ENCODE measurements at regions of chr17 and their contacts with region 1.

Region 1: GRCh38 chr17:63434876-63435684 is 11.0 kb downstream of the CYB561 start:
- DNase-seq: peak; percentile 69
- H3K4me3 ChIP-seq: no peak overlapping the region
- H3K27ac ChIP-seq: peak overlapping the region; percentile 97
- H3K4me1 ChIP-seq: peaks cover 48 to 94% of the 10 kb centered on the region in 2 experiments
- H3K27me3 ChIP-seq: no peaks in the 10 kb centered on the region
- CTCF ChIP-seq: peak; percentile 62
- EP300 ChIP-seq: peak in 1 of 2 experiments; percentile 73; a peak in 2 of 4 replicates
- RAD21 ChIP-seq: peak; percentile 25

Region 2: DNA sequence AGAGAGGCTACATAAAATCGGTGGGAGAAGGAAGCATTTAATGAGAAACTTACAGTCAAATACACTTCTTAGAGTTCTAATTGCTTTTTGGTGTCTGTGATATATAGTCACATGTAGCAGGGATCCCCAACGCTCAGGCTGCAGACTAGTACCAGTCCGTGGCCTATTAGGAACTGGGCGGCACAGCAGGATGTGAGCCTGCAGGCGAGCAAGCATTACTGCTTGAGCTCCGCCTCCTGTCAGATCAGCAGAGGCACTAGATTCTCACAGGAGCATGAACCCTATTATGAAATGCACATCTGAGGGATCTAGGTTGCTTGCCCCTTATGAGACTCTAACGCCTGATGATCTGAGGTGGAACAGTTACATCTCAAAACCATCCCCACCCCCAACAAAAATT is 310.5 kb before region 1 on chr17:
- CTCF ChIA-PET with region 1: no interaction called
- POLR2A ChIA-PET with region 1: no interaction called
- DNase-seq: no peak
- H3K4me3 ChIP-seq: no peak overlapping the region
- H3K27ac ChIP-seq: no peak overlapping the region
- H3K4me1 ChIP-seq: peaks cover 2 to 5% of the 10 kb centered on the region in 2 experiments; a peak in 3 of 4 replicates
- H3K27me3 ChIP-seq: no peaks in the 10 kb centered on the region
- CTCF ChIP-seq: no peak
- EP300 ChIP-seq: no peak
- RAD21 ChIP-seq: no peak

Region 3: DNA sequence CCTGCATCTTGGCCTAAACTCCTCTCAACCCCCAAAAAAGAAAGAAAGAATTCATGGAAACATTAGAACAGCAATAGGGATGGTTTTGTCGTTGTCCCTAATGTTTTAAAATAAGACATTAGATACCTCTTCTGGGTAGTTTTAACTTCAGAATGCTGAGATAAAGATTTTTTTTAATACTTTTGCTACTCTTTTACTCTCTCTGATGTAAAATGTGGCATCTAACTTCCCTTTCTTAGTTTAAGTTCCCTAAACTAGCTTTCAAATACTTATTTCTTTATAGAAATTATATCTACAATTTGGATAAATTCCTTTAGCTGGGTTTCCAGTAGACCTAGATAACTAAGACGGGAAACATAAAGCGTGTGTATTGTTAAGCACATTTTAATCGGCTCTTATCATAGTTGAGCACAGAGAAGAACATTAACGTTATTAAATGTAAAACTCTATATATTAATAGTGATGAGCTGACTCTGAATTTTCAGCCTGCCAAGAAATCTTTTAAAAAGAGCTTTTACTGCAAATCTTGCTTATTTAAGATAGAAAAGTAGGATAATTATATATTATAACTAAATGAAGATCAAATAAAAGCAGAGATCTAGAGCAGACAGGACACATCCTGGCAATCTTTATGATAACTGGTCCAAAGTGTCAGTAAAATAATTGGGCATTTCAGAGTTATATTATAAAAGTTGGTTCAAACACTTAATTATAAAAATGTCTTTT is 172.2 kb before region 1 on chr17:
- CTCF ChIA-PET with region 1: no interaction called
- POLR2A ChIA-PET with region 1: no interaction called
- DNase-seq: no peak
- H3K4me3 ChIP-seq: no peak overlapping the region
- H3K27ac ChIP-seq: no peak overlapping the region; a peak in 1 of 4 replicates
- H3K4me1 ChIP-seq: peaks cover 0 to 2% of the 10 kb centered on the region in 2 experiments; a peak in 3 of 4 replicates
- H3K27me3 ChIP-seq: no peaks in the 10 kb centered on the region
- CTCF ChIP-seq: no peak
- EP300 ChIP-seq: no peak
- RAD21 ChIP-seq: no peak

Region 4: GRCh38 chr17:63356337-63356757 is 78.7 kb before region 1 on chr17:
- CTCF ChIA-PET with region 1: no interaction called
- POLR2A ChIA-PET with region 1: no interaction called
- DNase-seq: no peak
- H3K4me3 ChIP-seq: no peak overlapping the region
- H3K27ac ChIP-seq: peak overlapping the region; percentile 92 to 97
- H3K4me1 ChIP-seq: peaks cover 34 to 53% of the 10 kb centered on the region in 2 experiments
- H3K27me3 ChIP-seq: no peaks in the 10 kb centered on the region
- CTCF ChIP-seq: no peak
- EP300 ChIP-seq: peak; percentile 79 to 98
- RAD21 ChIP-seq: peak; percentile 35; the same call in 1 of the 2 replicates

Region 5: GRCh38 chr17:63390090-63390489 is 45.0 kb before region 1 on chr17:
- CTCF ChIA-PET with region 1: no interaction called
- POLR2A ChIA-PET with region 1: no interaction called
- DNase-seq: no peak
- H3K4me3 ChIP-seq: no peak overlapping the region
- H3K27ac ChIP-seq: no peak overlapping the region
- H3K4me1 ChIP-seq: peaks cover 7 to 9% of the 10 kb centered on the region in 2 experiments; a peak in 3 of 4 replicates
- H3K27me3 ChIP-seq: no peaks in the 10 kb centered on the region
- CTCF ChIP-seq: no peak
- EP300 ChIP-seq: no peak
- RAD21 ChIP-seq: no peak

Region 6: DNA sequence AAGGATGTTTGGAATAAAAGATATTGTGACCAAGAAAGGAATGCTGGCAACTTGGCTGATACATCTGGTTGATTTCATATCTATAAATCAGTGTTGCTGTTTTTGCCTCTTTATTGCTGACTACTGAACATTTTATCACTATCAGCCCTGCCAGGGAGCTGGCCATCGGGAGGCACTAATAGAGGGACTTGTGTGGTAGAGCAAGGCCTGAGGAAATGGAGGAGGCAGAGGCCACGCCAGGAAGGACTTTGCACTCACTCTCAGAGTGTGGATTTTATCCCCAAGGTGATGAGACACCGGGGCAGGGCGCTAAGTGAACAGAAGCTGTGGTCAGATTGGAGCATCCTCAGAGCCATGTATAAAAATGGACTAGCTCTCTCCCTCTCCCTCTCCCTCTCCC is 20.3 kb after region 1 on chr17:
- CTCF ChIA-PET with region 1: interaction called, 575 read pairs
- POLR2A ChIA-PET with region 1: interaction called, 28 read pairs
- DNase-seq: peak; percentile 86
- H3K4me3 ChIP-seq: no peak overlapping the region
- H3K27ac ChIP-seq: peak overlapping the region; percentile 14 to 97; a peak in 3 of 4 replicates
- H3K4me1 ChIP-seq: peaks cover 3 to 41% of the 10 kb centered on the region in 2 experiments
- H3K27me3 ChIP-seq: no peaks in the 10 kb centered on the region
- CTCF ChIP-seq: no peak
- EP300 ChIP-seq: peak in 1 of 2 experiments; percentile 86; a peak in 2 of 4 replicates
- RAD21 ChIP-seq: peak; percentile 47

Region 7: GRCh38 chr17:63621766-63622519 is 186.9 kb after region 1 on chr17 and contains the start of gene MAP3K3:
- CTCF ChIA-PET with region 1: interaction called, 827 read pairs
- POLR2A ChIA-PET with region 1: interaction called, 15 read pairs
- DNase-seq: peak; percentile 99
- H3K4me3 ChIP-seq: peak within 1 kb of the TSS; percentile 79 to 87
- H3K27ac ChIP-seq: peak within 1 kb of the TSS; percentile 42 to 88; a peak in 3 of 4 replicates
- H3K4me1 ChIP-seq: peaks cover 13 to 14% of the 10 kb centered on the region in 2 experiments; a peak in 2 of 4 replicates
- H3K27me3 ChIP-seq: no peaks in the 10 kb centered on the region
- CTCF ChIP-seq: no peak; the same call in 1 of the 2 replicates
- EP300 ChIP-seq: peak in 1 of 2 experiments; percentile 29; a peak in 2 of 4 replicates
- RAD21 ChIP-seq: 0 out of 2 replicates have a peak, but pooled peaks have one; percentile 2
- polyA plus RNA-seq, gene MAP3K3: 25.3 and 26.5 TPM in 2 replicates

Measured in SK-N-SH (cell line).